BJ (cell line): ENCODE measurements at regions of chr14 and their contacts with region 1.

Region 1: DNA sequence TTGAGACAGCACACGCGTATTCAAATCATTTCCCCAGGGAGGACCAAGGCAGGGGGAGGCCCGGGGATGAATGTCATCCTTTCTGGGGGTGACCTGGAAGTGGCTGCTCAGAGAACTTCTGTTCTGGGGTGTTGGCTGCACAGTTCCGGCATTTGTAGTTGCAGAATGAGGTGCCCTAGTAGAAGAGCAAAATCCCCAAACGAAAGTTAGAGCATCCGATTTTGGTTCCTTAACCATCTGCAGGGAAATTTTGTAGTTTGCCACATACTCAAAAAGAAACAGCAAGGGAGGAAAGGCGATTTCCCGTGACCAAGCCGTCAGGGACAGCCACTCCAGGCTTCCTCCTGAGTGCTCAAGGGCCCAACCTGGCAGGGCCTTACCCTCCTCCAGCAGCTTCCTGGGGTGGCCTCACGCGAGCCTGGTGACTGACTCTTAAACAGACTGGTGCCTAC is 13.0 kb upstream of the TRAF3 start:
- DNase-seq: no peak
- H3K4me3 ChIP-seq: no peak overlapping the region
- H3K27me3 ChIP-seq: peaks cover 3% of the 10 kb centered on the region; the same call in 1 of the 2 replicates
- CTCF ChIP-seq: no peak

Region 2: DNA sequence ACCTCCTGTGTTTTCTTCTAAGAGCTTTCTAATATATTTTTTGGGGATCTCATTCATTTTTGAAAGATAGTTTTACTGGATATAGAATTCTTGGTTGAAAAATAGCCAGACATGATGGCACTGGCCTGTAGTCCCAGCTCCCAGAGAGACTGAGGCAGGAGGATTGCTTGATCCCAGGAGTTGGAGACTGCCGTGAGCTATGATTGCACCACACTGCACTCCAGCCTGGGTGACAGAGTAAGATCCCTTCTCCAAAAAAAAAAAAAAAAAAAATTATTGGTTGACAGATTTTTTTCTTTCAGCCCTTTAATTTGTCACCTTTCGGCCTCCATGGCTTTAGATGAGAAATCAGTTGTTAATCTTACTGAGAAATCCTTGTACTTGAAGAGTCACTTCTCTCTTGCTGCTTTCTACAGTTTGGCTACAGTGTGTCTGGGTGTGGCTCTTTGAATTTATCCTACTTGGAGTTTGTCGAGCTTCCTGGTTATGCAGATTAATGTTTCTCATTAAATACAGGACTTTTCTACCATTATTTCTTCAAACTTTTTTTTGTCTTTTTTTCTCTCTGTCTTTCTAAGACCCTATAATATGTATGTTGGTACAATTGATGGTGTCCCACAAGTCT is 98.0 kb after region 1 on chr14:
- CTCF ChIA-PET with region 1: no interaction called
- POLR2A ChIA-PET with region 1: interaction called, 18 read pairs
- DNase-seq: no peak
- H3K4me3 ChIP-seq: no peak overlapping the region
- H3K27me3 ChIP-seq: no peaks in the 10 kb centered on the region
- CTCF ChIP-seq: no peak